Naive thymus-derived CD4-positive, alpha-beta T cell (primary cell): ENCODE measurements at regions of chr1 and their contacts with region 1.

Region 1: DNA sequence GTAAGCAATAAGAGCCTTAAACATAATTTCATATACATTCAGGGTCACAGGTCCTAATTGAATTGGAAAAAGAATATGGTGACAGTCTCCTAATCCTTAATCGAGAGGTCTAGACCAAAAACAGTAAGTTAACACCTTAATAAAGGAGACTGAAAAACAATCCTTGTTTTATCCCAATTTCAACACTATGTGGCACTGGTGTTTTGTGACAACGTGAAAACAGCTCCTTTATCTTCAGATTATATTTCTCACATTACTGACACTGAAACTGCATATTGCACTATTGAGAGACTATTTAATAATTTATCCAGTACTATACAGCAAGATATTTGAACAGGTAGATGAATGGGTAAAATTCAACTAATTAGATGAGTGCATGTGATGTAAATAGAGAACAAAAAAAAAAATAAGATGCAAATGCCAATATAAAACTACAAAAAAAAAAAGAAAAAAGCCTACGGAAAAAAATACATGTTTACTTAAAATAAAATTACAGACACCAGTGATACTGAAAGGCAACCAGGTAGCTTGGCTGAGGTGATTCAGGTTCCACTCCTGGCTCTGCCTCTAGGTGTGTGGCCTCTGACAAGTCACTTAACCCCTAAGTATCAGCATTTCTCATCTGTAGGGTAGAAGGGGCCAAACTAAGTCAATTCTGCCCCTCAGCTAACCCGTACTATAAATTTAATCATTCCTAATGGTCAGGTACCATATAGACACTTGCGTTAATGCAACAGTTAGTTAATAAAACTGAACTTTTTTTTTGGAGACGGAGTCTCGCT is 33.9 kb downstream of the TP53BP2 start:
- DNase-seq: peak in 6 of 9 donors; percentile 24 to 58 (median 44)
- ATAC-seq: peak; percentile 72
- H3K4me3 ChIP-seq: no peak overlapping the region
- H3K4me3 Mint-ChIP-seq: peak overlapping the region in 2 of 10 donors; percentile 44 to 49
- H3K27ac ChIP-seq: no peak overlapping the region
- H3K27ac Mint-ChIP-seq: peak overlapping the region in 6 of 9 donors; percentile 19 to 63 (median 57)
- H3K4me1 ChIP-seq: peaks cover 0 to 22% of the 10 kb centered on the region in 2 donors
- H3K4me1 Mint-ChIP-seq: peaks cover 16 to 44% (median 39%) of the 10 kb centered on the region in 7 donors
- H3K27me3 ChIP-seq: no peaks in the 10 kb centered on the region
- H3K27me3 Mint-ChIP-seq: no peaks in the 10 kb centered on the region

Region 2: DNA sequence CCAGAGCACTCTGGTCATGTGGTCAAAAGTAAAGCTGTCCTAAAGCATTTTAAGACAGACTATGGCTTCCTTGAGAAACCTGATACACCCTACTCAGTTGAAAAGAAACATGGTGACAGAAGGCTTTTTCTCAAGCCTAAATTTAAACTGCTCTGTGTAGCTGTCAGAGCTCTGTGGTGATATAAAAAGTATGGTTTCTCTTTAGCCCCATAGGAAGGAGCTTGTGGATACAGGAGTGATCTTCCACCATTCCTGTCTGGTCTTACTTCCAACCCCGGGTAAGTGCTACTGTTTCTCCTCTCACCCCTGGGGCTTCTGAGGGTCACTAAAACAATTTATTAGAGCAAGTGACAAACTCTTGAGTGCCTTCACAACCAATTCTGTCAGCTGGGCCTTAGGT is 25.4 kb after region 1 on chr1:
- CTCF ChIA-PET with region 1: interaction called, 13 read pairs
- POLR2A ChIA-PET with region 1: interaction called, 4 read pairs
- intact Hi-C with region 1: no loop called
- DNase-seq: no peak
- ATAC-seq: no peak
- H3K4me3 ChIP-seq: no peak overlapping the region
- H3K4me3 Mint-ChIP-seq: no peak overlapping the region
- H3K27ac ChIP-seq: no peak overlapping the region
- H3K27ac Mint-ChIP-seq: peak overlapping the region in 3 of 9 donors; percentile 14 to 85 (median 66)
- H3K4me1 ChIP-seq: peaks cover 49 to 51% of the 10 kb centered on the region in 2 donors
- H3K4me1 Mint-ChIP-seq: peaks cover 15 to 30% (median 27%) of the 10 kb centered on the region in 7 donors
- H3K27me3 ChIP-seq: no peaks in the 10 kb centered on the region
- H3K27me3 Mint-ChIP-seq: no peaks in the 10 kb centered on the region

Region 3: DNA sequence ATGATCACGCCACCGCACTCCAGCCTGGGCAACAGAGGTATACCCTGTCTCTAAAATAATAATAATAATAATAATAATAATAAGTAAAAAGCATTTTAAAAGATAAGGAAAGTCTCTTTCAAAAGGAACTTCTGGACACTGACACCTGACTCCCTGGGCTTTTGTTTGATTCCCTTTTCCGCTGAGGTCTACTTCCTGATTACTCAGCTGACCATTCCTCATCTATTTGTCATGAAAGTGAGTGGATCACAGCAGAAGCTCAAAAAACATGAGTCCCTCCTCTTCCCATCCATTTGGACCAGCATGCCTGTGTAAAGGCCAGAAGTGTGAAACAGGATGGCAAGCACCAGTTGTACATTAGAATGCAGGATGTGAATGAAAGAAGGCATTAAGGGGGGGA is 240.9 kb after region 1 on chr1:
- CTCF ChIA-PET with region 1: interaction called, 3 read pairs
- POLR2A ChIA-PET with region 1: no interaction called
- intact Hi-C with region 1: loop called (anchors 1 to 2 kb)
- DNase-seq: no peak
- ATAC-seq: no peak
- H3K4me3 ChIP-seq: no peak overlapping the region
- H3K4me3 Mint-ChIP-seq: no peak overlapping the region
- H3K27ac ChIP-seq: no peak overlapping the region
- H3K27ac Mint-ChIP-seq: no peak overlapping the region
- H3K4me1 ChIP-seq: no peaks in the 10 kb centered on the region
- H3K4me1 Mint-ChIP-seq: peaks cover 0 to 4% (median 0%) of the 10 kb centered on the region in 7 donors
- H3K27me3 ChIP-seq: no peaks in the 10 kb centered on the region
- H3K27me3 Mint-ChIP-seq: peaks cover 0 to 10% (median 0%) of the 10 kb centered on the region in 5 donors

Region 4: DNA sequence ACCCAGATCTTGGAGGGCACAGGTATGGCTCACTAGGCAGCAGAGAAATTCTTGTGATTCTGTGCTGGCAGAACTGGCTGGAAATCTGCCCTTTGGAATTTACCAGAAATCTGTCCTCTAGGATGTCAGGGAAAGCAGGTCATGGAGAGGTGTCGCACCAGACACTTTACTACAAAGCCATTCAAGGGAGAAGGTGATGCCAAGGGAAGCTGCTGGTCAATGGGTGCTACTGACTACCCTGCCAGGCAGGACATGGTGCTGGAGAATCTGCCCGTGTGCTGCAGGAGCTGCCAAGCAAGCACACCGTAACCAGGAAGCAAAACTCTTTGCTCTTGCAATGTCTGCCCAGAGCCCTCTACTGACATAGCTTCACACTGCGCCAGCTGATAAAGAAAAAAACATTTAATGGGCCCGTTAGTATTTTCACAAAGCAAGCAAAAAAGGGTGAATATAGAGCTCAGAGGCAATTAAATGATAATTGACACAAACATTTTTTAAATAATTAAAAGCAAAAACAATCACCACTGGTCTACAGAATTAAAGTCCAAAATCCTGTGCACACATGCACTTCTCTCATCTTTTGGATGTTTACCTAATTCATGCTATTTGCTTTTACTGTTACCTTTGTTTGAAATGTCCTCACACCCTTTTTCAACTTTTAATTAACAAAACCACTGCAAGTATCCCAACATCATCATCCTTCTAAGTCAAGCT is 294.9 kb after region 1 on chr1:
- CTCF ChIA-PET with region 1: no interaction called
- POLR2A ChIA-PET with region 1: no interaction called
- intact Hi-C with region 1: loop called in 1 of 2 experiments (anchors 5 kb)
- DNase-seq: peak in 2 of 9 donors; percentile 7 to 12
- ATAC-seq: peak; percentile 70
- H3K4me3 ChIP-seq: no peak overlapping the region
- H3K4me3 Mint-ChIP-seq: no peak overlapping the region
- H3K27ac ChIP-seq: no peak overlapping the region
- H3K27ac Mint-ChIP-seq: no peak overlapping the region
- H3K4me1 ChIP-seq: peaks cover 0 to 5% of the 10 kb centered on the region in 2 donors
- H3K4me1 Mint-ChIP-seq: peaks cover 0 to 4% (median 0%) of the 10 kb centered on the region in 7 donors
- H3K27me3 ChIP-seq: no peaks in the 10 kb centered on the region
- H3K27me3 Mint-ChIP-seq: peaks cover 4 to 65% (median 16%) of the 10 kb centered on the region in 5 donors

Region 5: GRCh38 chr1:225754940-225755641 is 1943.3 kb after region 1 on chr1:
- CTCF ChIA-PET with region 1: no interaction called
- POLR2A ChIA-PET with region 1: no interaction called
- intact Hi-C with region 1: no loop called
- DNase-seq: no peak
- ATAC-seq: no peak
- H3K4me3 ChIP-seq: no peak overlapping the region
- H3K4me3 Mint-ChIP-seq: no peak overlapping the region
- H3K27ac ChIP-seq: no peak overlapping the region
- H3K27ac Mint-ChIP-seq: no peak overlapping the region
- H3K4me1 ChIP-seq: no peaks in the 10 kb centered on the region
- H3K4me1 Mint-ChIP-seq: peaks cover 0 to 9% (median 0%) of the 10 kb centered on the region in 7 donors
- H3K27me3 ChIP-seq: no peaks in the 10 kb centered on the region
- H3K27me3 Mint-ChIP-seq: peaks cover 0 to 9% (median 0%) of the 10 kb centered on the region in 5 donors